ENCODE measurements at regions of chr3 and their contacts with region 1.

Region 1: GRCh38 chr3:48918388-48919214 is at the start of gene ARIH2:
- DNase-seq: peak; percentile 92
- H3K4me3 Mint-ChIP-seq: peak within 1 kb of the TSS; percentile 88
- H3K27ac Mint-ChIP-seq: peak within 1 kb of the TSS; percentile 99
- H3K4me1 Mint-ChIP-seq: peaks cover 33% of the 10 kb centered on the region
- H3K27me3 Mint-ChIP-seq: no peaks in the 10 kb centered on the region
- total RNA-seq, gene ARIH2: 100 TPM

Region 2: GRCh38 chr3:48679411-48680391 is 238.9 kb before region 1 on chr3:
- CTCF ChIA-PET with region 1: no interaction called
- POLR2A ChIA-PET with region 1: no interaction called
- DNase-seq: no peak
- H3K4me3 Mint-ChIP-seq: no peak overlapping the region
- H3K27ac Mint-ChIP-seq: peak overlapping the region; percentile 59
- H3K4me1 Mint-ChIP-seq: peaks cover 37% of the 10 kb centered on the region
- H3K27me3 Mint-ChIP-seq: no peaks in the 10 kb centered on the region

Region 3: GRCh38 chr3:48716982-48717746 is 201.4 kb before region 1 on chr3 and contains the start of gene IP6K2:
- CTCF ChIA-PET with region 1: no interaction called
- POLR2A ChIA-PET with region 1: interaction called, 17 read pairs
- DNase-seq: peak; percentile 99
- H3K4me3 Mint-ChIP-seq: peak within 1 kb of the TSS; percentile 100
- H3K27ac Mint-ChIP-seq: peak within 1 kb of the TSS; percentile 96
- H3K4me1 Mint-ChIP-seq: peaks cover 44% of the 10 kb centered on the region
- H3K27me3 Mint-ChIP-seq: peaks cover 19% of the 10 kb centered on the region
- total RNA-seq, gene IP6K2: 52.7 to 57.8 TPM

Region 4: GRCh38 chr3:48847504-48848423 is 70.8 kb before region 1 on chr3 and contains the start of gene PRKAR2A:
- CTCF ChIA-PET with region 1: interaction called, 5 read pairs
- POLR2A ChIA-PET with region 1: interaction called, 24 read pairs
- DNase-seq: peak; percentile 83
- H3K4me3 Mint-ChIP-seq: peak within 1 kb of the TSS; percentile 81
- H3K27ac Mint-ChIP-seq: peak within 1 kb of the TSS; percentile 83
- H3K4me1 Mint-ChIP-seq: peaks cover 26% of the 10 kb centered on the region
- H3K27me3 Mint-ChIP-seq: no peaks in the 10 kb centered on the region
- total RNA-seq, gene PRKAR2A: 28.3 to 29.7 TPM

Region 5: GRCh38 chr3:48898383-48899234 is 20.0 kb before region 1 on chr3 and contains the start of gene SLC25A20:
- CTCF ChIA-PET with region 1: interaction called, 25 read pairs
- POLR2A ChIA-PET with region 1: interaction called, 91 read pairs
- DNase-seq: peak; percentile 95
- H3K4me3 Mint-ChIP-seq: peak within 1 kb of the TSS; percentile 89
- H3K27ac Mint-ChIP-seq: peak within 1 kb of the TSS; percentile 91
- H3K4me1 Mint-ChIP-seq: peaks cover 46% of the 10 kb centered on the region
- H3K27me3 Mint-ChIP-seq: no peaks in the 10 kb centered on the region
- total RNA-seq, gene SLC25A20: 25.6 to 29.5 TPM

Region 6: GRCh38 chr3:48989796-48990635 is 71.4 kb after region 1 on chr3 and contains the start of gene P4HTM:
- CTCF ChIA-PET with region 1: interaction called, 3 read pairs
- POLR2A ChIA-PET with region 1: interaction called, 13 read pairs
- DNase-seq: peak; percentile 79
- H3K4me3 Mint-ChIP-seq: peak within 1 kb of the TSS; percentile 92
- H3K27ac Mint-ChIP-seq: peak within 1 kb of the TSS; percentile 90
- H3K4me1 Mint-ChIP-seq: peaks cover 45% of the 10 kb centered on the region
- H3K27me3 Mint-ChIP-seq: no peaks in the 10 kb centered on the region
- total RNA-seq, gene P4HTM: 48.4 to 49.9 TPM

Region 7: GRCh38 chr3:49007068-49007770 is 88.6 kb after region 1 on chr3 and contains the start of gene WDR6:
- CTCF ChIA-PET with region 1: interaction called, 8 read pairs
- POLR2A ChIA-PET with region 1: interaction called, 22 read pairs
- DNase-seq: peak; percentile 98
- H3K4me3 Mint-ChIP-seq: peak within 1 kb of the TSS; percentile 99
- H3K27ac Mint-ChIP-seq: peak within 1 kb of the TSS; percentile 99
- H3K4me1 Mint-ChIP-seq: peaks cover 34% of the 10 kb centered on the region
- H3K27me3 Mint-ChIP-seq: no peaks in the 10 kb centered on the region
- total RNA-seq, gene WDR6: 135 to 148 TPM

Region 8: DNA sequence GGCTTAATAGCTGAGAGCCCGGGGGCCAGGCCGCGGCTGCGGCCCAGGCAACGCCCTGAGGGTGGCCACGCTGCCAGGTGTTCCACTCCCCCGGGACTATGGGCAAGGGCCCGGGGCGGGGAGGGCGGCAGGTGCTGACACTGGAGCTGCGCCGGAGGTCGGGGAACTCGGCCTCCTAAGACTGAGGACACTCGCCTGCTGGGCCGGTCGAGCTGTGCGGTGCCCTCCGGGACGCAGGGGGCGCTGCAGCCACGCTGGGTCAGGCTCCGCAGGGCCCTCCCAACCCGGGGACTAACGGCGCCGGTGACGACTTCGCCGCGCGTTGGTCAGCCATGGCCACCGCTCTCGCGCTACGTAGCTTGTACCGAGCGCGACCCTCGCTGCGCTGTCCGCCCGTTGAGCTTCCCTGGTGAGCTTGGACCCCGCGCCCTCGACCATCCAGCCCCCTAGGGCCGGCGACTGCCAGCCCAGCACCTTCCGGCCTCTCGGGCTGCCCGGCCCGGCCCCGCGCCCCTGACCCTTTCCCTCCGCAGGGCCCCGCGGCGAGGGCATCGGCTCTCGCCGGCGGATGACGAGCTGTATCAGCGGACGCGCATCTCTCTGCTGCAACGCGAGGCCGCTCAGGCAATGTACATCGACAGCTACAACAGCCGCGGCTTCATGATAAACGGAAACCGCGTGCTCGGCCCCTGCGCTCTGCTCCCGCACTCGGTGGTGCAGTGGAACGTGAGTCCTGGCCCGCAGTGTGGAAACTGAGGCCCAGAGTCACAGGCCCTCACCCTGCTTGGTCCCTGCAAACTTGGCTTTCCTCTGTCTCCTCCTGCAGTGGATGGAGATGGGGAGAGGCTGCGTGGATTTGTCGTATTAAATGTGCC is 103.4 kb after region 1 on chr3 and contains the start of gene NDUFAF3:
- CTCF ChIA-PET with region 1: interaction called, 5 read pairs
- POLR2A ChIA-PET with region 1: interaction called, 29 read pairs
- DNase-seq: peak; percentile 93
- H3K4me3 Mint-ChIP-seq: peak within 1 kb of the TSS; percentile 98
- H3K27ac Mint-ChIP-seq: peak within 1 kb of the TSS; percentile 98
- H3K4me1 Mint-ChIP-seq: peaks cover 67% of the 10 kb centered on the region
- H3K27me3 Mint-ChIP-seq: no peaks in the 10 kb centered on the region
- total RNA-seq, gene NDUFAF3: 98.1 to 108 TPM

Measured in activated CD4-positive, alpha-beta memory T cell treated with anti-CD3 and anti-CD28 coated beads, Interleukin-2, amount 10 ng/mL, durations not matched to agents 7 days and 5 days (primary cell).